Prostate gland (tissue), 2 donors: ENCODE measurements at regions of chr10 and their contacts with region 1.

Region 1: GRCh38 chr10:112137154-112137987 is 46.2 kb downstream of the GPAM start:
- DNase-seq: peak; percentile 44
- H3K4me3 ChIP-seq: no peak overlapping the region
- H3K27ac ChIP-seq: no peak overlapping the region
- H3K4me1 ChIP-seq: no peaks in the 10 kb centered on the region
- H3K27me3 ChIP-seq: no peaks in the 10 kb centered on the region
- CTCF ChIP-seq: peak; percentile 71 to 80 (median 78)
- POLR2A ChIP-seq: no peak

Region 2: DNA sequence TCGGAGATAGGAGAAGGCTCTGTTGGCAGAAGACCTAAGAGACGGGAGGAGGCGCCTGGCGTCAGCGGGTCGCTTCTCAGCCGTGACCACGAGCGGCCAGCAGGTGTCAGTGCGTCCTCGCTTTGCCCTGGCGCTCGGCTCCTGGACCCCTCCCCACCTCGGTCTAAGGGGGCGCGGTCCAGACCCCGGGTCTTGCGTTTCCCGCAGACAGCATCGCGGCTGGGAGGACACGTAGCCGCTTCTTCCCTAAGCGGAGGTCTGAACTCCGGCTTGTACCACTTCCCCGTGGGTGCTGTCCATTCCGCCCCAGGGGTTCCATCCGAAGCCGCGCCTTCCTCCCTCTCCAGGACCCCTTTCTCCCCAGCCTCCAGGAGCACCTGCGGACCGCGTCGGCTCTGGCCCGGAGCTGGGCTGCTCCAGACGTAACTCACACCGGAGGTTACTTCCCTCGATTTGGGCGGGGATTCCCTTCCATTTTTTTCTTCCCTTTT is 1061.1 kb before region 1 on chr10:
- intact Hi-C with region 1: loop called (anchors 10 kb)
- DNase-seq: peak; percentile 31
- H3K4me3 ChIP-seq: peak overlapping the region; percentile 32 to 33
- H3K27ac ChIP-seq: no peak overlapping the region
- H3K4me1 ChIP-seq: peaks cover 4% of the 10 kb centered on the region
- H3K27me3 ChIP-seq: peaks cover 8% of the 10 kb centered on the region
- CTCF ChIP-seq: peak; percentile 62 to 73 (median 68)
- POLR2A ChIP-seq: no peak

Region 3: DNA sequence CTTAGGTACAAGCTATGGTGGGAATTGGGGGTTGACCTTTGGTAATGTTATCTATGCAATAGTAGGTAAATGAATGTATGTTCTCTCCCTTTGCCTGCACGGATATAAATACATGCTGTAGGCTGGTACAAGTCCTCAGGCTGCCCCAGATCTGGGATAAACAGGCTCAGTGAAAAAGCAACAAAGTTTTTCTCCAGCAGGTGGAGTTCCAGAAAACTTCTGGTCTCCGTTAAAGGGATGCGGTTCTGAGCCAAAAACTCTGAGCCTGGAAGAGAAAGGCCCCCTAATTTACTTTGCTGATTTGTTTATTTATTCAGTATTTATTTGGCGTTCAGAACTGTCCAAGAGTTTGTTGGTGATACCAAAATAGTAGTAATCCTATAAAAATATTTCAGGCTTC is 855.9 kb before region 1 on chr10:
- intact Hi-C with region 1: loop called (anchors 10 kb)
- DNase-seq: no peak
- H3K4me3 ChIP-seq: no peak overlapping the region
- H3K27ac ChIP-seq: no peak overlapping the region
- H3K4me1 ChIP-seq: no peaks in the 10 kb centered on the region
- H3K27me3 ChIP-seq: peaks cover 2% of the 10 kb centered on the region
- CTCF ChIP-seq: peak in 1 of 4 experiments; percentile 26
- POLR2A ChIP-seq: no peak

Region 4: DNA sequence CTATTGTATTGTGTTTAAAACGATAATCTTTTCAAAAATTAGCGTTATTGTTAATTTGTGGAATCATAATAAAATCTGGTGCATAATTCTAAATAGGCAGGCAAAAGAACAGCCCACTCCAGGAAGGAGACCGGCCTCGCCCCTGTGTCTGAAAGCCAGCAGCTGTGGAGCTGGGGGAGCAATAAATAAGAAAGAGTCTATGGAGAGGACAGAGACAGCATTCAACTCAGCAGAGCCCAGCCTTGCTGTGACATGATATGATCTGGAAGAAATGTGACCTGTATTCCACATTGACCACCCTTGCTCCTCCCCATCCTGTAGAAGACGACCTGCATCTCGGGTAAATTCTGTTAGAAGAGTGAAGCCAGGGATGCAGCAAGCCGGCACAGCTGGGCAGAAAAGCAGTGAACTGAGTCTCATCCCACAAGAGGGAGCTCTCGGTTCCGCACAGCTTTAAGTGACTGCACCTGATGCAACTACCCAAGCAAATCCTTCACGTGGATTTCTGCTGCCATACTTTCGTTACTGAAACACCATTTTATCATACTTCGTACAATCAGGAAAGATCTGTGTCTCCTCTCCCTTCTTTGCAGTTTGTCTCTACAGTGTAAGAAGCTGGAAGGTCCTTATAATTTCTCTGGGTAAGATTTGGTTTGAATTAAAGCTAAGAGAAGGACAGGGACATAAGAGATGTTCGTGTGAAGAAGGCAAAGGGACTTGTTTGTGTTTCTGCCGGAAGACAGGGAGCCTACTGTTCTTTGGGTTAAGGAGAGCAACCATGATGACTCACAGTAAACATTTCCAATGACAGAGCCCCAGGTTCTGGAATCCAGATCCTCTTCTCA is 380.9 kb before region 1 on chr10:
- intact Hi-C with region 1: loop called (anchors 2 kb)
- DNase-seq: peak; percentile 10
- H3K4me3 ChIP-seq: no peak overlapping the region
- H3K27ac ChIP-seq: no peak overlapping the region
- H3K4me1 ChIP-seq: no peaks in the 10 kb centered on the region
- H3K27me3 ChIP-seq: no peaks in the 10 kb centered on the region
- CTCF ChIP-seq: peak in 3 of 4 experiments; percentile 15 to 45 (median 38)
- POLR2A ChIP-seq: no peak